Naive thymus-derived CD4-positive, alpha-beta T cell (primary cell): ENCODE measurements at regions of chr12 and their contacts with region 1.

Region 1: GRCh38 chr12:92304371-92305055 is 158.9 kb upstream of the BTG1 start:
- DNase-seq: no peak
- ATAC-seq: no peak
- H3K4me3 ChIP-seq: no peak overlapping the region
- H3K4me3 Mint-ChIP-seq: no peak overlapping the region
- H3K27ac ChIP-seq: no peak overlapping the region
- H3K27ac Mint-ChIP-seq: peak overlapping the region in 2 of 9 donors; percentile 5 to 8
- H3K4me1 ChIP-seq: peaks cover 0 to 9% of the 10 kb centered on the region in 2 donors
- H3K4me1 Mint-ChIP-seq: peaks cover 9 to 49% (median 17%) of the 10 kb centered on the region in 7 donors
- H3K27me3 ChIP-seq: no peaks in the 10 kb centered on the region
- H3K27me3 Mint-ChIP-seq: no peaks in the 10 kb centered on the region

Region 2: DNA sequence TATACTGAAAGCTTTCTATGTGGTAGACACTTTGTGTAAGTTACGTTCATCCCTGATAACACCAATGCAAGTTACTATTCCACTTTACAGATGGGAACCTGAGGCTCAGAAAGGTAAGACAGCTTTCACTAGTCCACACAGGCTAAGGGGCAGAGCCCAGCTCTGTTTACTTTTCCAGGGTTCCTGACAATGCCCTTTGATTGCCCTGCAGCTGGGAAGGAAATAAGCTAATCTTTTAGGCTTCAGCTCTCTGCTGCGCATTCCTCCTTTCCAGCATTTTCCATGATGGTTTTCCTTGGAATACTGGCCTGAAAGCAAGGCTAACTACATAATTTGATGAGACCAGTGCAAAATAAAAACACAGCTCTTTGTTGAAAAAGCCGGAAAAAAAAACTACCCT is 26.9 kb after region 1 on chr12:
- CTCF ChIA-PET with region 1: no interaction called
- POLR2A ChIA-PET with region 1: no interaction called
- intact Hi-C with region 1: loop called in 1 of 2 experiments (anchors 2 kb)
- DNase-seq: no peak
- ATAC-seq: no peak
- H3K4me3 ChIP-seq: no peak overlapping the region
- H3K4me3 Mint-ChIP-seq: no peak overlapping the region
- H3K27ac ChIP-seq: no peak overlapping the region
- H3K27ac Mint-ChIP-seq: peak overlapping the region in 1 of 9 donors; percentile 25
- H3K4me1 ChIP-seq: peaks cover 6 to 20% of the 10 kb centered on the region in 2 donors
- H3K4me1 Mint-ChIP-seq: peaks cover 17 to 75% (median 58%) of the 10 kb centered on the region in 7 donors
- H3K27me3 ChIP-seq: no peaks in the 10 kb centered on the region
- H3K27me3 Mint-ChIP-seq: no peaks in the 10 kb centered on the region